BJ (cell line): ENCODE measurements at regions of chr19 and their contacts with region 1.

Region 1: DNA sequence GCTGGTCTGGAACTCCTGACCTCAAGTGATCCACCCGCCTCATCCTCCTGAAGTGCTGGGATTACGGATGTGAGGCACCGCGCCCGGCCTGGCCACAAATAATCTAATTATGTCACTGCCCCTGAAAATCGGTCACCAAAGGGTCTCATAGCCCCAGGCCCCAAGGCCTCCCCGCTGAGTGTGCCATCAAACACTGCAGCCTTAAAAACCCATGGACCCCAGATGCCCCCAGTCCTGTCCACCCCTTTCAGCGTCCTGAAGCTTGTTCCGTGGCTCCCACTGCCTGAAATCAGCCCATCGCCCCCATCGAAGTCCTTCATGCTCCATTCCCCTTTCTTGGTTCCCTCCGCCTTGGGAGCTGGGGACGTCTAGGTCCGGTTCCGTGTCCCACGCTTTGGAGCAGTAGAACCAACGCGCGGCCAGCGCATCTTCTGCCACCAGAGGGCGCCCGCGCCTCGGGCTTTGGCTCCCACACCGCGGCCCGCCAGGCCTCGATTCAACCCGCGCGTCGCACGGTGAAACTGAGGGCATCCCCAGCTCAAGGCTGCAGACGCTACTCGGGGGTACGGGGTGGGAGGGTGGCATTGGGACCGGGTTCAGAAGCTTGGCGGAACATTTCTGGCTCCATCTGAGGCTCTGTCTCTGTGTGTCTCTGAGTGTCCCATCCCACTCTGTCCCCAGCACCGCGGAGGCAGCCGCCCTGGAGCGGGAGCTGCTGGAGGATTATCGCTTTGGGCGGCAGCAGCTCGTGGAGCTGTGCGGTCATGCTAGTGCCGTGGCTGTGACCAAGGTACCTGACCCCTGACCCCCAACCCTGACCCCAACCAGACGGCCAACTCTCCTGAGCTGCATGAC is 3.5 kb downstream of the YJEFN3 start:
- DNase-seq: no peak
- H3K4me3 ChIP-seq: no peak overlapping the region
- H3K27me3 ChIP-seq: no peaks in the 10 kb centered on the region
- CTCF ChIP-seq: peak; percentile 98

Region 2: GRCh38 chr19:19547674-19548336 is 15.6 kb after region 1 on chr19:
- CTCF ChIA-PET with region 1: interaction called, 103 read pairs
- POLR2A ChIA-PET with region 1: no interaction called
- DNase-seq: no peak
- H3K4me3 ChIP-seq: no peak overlapping the region
- H3K27me3 ChIP-seq: no peaks in the 10 kb centered on the region; the same call in 1 of the 2 replicates
- CTCF ChIP-seq: no peak

Region 3: GRCh38 chr19:19562665-19563347 is 30.6 kb after region 1 on chr19:
- CTCF ChIA-PET with region 1: interaction called, 11 read pairs
- POLR2A ChIA-PET with region 1: interaction called, 3 read pairs
- DNase-seq: no peak
- H3K4me3 ChIP-seq: no peak overlapping the region
- H3K27me3 ChIP-seq: no peaks in the 10 kb centered on the region
- CTCF ChIP-seq: no peak

Region 4: GRCh38 chr19:19627621-19628500 is 95.7 kb after region 1 on chr19 and contains the start of gene LPAR2:
- CTCF ChIA-PET with region 1: interaction called, 17 read pairs
- POLR2A ChIA-PET with region 1: no interaction called
- DNase-seq: no peak
- H3K4me3 ChIP-seq: peak within 1 kb of the TSS; percentile 37
- H3K27me3 ChIP-seq: no peaks in the 10 kb centered on the region
- CTCF ChIP-seq: no peak
- polyA plus RNA-seq, gene LPAR2: 2.1 and 2.4 TPM in 2 replicates

Region 5: GRCh38 chr19:19651076-19651475 is 118.9 kb after region 1 on chr19:
- CTCF ChIA-PET with region 1: interaction called, 83 read pairs
- POLR2A ChIA-PET with region 1: no interaction called
- DNase-seq: no peak
- H3K4me3 ChIP-seq: no peak overlapping the region
- H3K27me3 ChIP-seq: no peaks in the 10 kb centered on the region
- CTCF ChIP-seq: no peak